Calu3 (cell line): ENCODE measurements at regions of chr5 and their contacts with region 1.

Region 1: GRCh38 chr5:43120720-43121564 is at the start of gene ZNF131:
- DNase-seq: peak; percentile 97
- H3K4me3 Mint-ChIP-seq: peak within 1 kb of the TSS; percentile 92
- H3K27ac Mint-ChIP-seq: peak within 1 kb of the TSS; percentile 96
- H3K4me1 Mint-ChIP-seq: peaks cover 19% of the 10 kb centered on the region
- H3K27me3 Mint-ChIP-seq: no peaks in the 10 kb centered on the region
- CTCF ChIP-seq: no peak
- total RNA-seq, gene ZNF131: 37.0 and 40.9 TPM in 2 replicates

Region 2: DNA sequence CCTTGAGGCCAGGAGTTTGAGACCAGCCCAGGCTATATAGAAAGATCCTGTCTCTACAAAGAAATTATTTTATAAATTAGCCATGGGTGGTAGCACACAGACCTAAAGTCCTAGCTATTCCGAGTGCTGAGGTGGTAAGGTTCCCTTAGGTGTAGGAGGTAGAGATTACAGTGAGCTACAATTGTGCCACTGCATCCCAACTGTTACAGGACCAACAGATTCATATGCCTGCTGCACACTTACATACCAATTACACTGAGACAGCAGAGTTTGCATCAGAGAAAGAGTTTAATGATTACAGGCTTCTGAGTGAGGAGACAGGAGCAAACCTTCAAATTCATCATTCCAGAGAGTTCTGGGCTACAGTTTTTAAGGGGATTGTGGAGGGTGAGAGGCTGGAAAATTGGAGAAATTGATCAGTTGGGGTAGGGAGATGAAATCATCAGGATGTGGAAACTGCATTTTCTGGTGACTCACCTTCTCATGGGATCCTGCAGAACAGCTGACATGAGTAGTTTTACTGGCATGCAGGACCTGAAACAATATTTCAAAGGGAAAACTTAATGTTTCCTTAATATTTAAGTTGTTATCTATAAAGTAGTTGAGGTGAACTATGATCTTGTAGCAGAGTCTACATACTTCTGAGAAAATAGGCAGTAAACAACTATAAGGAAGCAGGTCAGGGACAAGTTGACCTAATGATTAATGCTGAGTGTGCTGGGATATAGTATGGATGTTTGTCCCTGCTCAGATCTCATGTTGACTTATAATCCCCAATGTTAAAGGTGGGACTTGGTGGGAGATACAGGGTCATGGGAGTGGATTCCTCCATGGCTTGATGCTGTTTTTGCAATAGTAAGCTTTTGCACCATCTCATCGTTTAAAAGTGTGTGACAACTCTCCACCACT is 135.6 kb before region 1 on chr5:
- CTCF ChIA-PET with region 1: no interaction called
- intact Hi-C with region 1: no loop called
- DNase-seq: peak; percentile 38
- H3K4me3 Mint-ChIP-seq: peak overlapping the region; percentile 95
- H3K27ac Mint-ChIP-seq: peak overlapping the region; percentile 99
- H3K4me1 Mint-ChIP-seq: peaks cover 63% of the 10 kb centered on the region
- H3K27me3 Mint-ChIP-seq: no peaks in the 10 kb centered on the region
- CTCF ChIP-seq: no peak

Region 3: GRCh38 chr5:43096916-43097315 is 24.0 kb before region 1 on chr5:
- CTCF ChIA-PET with region 1: interaction called, 12 read pairs
- intact Hi-C with region 1: no loop called
- DNase-seq: no peak
- H3K4me3 Mint-ChIP-seq: no peak overlapping the region
- H3K27ac Mint-ChIP-seq: no peak overlapping the region
- H3K4me1 Mint-ChIP-seq: no peaks in the 10 kb centered on the region
- H3K27me3 Mint-ChIP-seq: no peaks in the 10 kb centered on the region
- CTCF ChIP-seq: no peak

Region 4: DNA sequence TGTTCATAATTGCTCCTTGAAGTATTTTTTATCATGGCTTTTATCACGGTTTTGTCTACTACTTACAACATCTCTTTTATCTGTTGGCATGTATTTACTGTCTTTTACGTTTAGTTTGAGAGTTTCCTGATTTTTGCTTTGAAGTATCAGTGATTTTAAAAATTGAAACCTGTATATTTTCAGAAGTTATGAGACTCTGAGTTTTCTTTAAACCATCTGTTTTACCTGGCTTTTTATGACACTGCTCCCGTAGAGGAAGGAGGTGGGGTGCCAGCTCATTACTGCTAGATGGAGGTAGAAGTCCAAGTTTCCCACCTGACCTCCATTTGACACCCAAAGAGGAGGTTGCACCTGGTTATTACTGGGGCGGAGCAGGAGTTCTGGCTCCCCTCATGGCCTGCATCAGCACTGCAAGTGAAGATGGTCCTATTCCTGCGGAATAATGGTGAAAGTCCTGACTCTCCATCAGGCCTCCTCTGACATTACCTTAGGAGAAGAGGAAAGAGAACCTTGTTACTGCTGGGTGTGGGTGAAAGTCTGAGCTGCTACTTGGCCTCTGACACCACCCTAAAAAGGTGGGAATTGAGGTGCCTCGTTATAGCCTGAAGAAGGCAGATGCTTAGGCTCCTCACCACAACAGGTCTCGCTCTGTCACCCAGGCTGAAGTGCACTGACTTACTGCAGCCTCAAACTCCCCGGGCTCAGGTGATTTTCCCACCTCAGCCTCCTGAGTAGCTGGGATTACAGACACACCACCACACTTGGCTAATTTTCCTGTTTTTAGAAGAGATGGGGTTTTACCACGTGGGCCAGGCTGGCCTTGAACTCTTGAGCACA is 10.1 kb before region 1 on chr5:
- CTCF ChIA-PET with region 1: interaction called, 13 read pairs
- intact Hi-C with region 1: no loop called
- DNase-seq: peak; percentile 46
- H3K4me3 Mint-ChIP-seq: no peak overlapping the region
- H3K27ac Mint-ChIP-seq: no peak overlapping the region
- H3K4me1 Mint-ChIP-seq: no peaks in the 10 kb centered on the region
- H3K27me3 Mint-ChIP-seq: no peaks in the 10 kb centered on the region
- CTCF ChIP-seq: peak; percentile 44